Mammary epithelial cell (primary cell): ENCODE measurements at regions of chr22 and their contacts with region 1.

Region 1: GRCh38 chr22:23849009-23850006 is 8.4 kb upstream of the SLC2A11 start:
- DNase-seq: peak; percentile 73
- H3K4me3 ChIP-seq: peak overlapping the region in 2 of 3 experiments; percentile 25 to 37
- H3K27ac ChIP-seq: no peak overlapping the region
- H3K4me1 ChIP-seq: peaks cover 38% of the 10 kb centered on the region
- H3K27me3 ChIP-seq: no peaks in the 10 kb centered on the region
- CTCF ChIP-seq: peak; percentile 74 to 98

Region 2: GRCh38 chr22:23322547-23322946 is 526.8 kb before region 1 on chr22:
- CTCF ChIA-PET with region 1: no interaction called
- dilution Hi-C with region 1: no loop called
- in situ Hi-C with region 1: no loop called
- intact Hi-C with region 1: loop called (anchors 5 kb)
- DNase-seq: no peak
- H3K4me3 ChIP-seq: no peak overlapping the region
- H3K27ac ChIP-seq: no peak overlapping the region
- H3K4me1 ChIP-seq: no peaks in the 10 kb centered on the region
- H3K27me3 ChIP-seq: no peaks in the 10 kb centered on the region
- CTCF ChIP-seq: no peak

Region 3: DNA sequence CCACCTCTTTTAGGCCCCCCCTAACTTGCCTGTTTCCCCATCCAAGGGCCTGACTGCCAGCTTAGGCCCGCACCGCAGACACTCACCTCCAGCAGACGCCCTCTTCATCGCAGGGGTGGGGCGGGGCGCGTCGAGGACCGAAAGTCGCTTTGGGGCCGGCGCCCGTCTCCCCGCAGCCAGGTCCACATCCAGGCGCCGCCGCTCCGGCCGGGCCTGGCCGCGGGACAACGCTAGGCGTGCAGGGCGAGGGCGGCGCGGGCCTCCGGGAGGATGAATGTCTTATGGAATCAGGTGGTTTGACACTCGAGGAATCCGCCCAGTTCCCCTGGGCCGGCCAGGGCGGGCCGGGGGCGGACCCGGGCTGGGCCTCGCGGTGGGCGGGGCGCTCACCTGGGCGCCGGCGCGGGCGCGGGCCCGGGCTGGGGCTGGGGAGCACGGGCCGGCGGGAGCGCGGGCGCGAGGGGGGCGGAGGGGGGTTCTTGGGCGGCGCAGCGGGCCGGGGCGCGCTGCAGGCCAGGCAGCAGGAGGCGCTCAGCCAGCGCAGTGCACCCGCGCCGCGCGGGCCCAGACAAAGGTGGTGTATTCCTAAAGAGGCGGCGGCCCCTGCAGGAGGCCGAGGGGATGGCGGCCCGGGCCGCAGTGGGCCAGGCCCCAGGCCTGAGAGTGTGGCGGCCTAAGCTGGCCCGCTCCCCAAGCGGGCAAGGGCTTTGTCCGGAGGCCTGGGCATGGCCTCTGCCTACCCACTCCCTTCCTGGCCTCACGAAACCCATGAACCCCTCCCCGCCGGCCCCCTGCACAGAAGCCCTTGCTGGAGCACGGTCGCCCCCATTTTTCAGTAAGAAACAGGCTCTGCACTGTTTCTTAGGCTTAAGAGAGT is 446.8 kb before region 1 on chr22:
- CTCF ChIA-PET with region 1: no interaction called
- dilution Hi-C with region 1: no loop called
- in situ Hi-C with region 1: no loop called
- intact Hi-C with region 1: loop called (anchors 5 kb)
- DNase-seq: peak; percentile 81
- H3K4me3 ChIP-seq: peak overlapping the region; percentile 53 to 67 (median 59)
- H3K27ac ChIP-seq: peak overlapping the region; percentile 33
- H3K4me1 ChIP-seq: peaks cover 29% of the 10 kb centered on the region
- H3K27me3 ChIP-seq: no peaks in the 10 kb centered on the region
- CTCF ChIP-seq: peak; percentile 57 to 71

Region 4: DNA sequence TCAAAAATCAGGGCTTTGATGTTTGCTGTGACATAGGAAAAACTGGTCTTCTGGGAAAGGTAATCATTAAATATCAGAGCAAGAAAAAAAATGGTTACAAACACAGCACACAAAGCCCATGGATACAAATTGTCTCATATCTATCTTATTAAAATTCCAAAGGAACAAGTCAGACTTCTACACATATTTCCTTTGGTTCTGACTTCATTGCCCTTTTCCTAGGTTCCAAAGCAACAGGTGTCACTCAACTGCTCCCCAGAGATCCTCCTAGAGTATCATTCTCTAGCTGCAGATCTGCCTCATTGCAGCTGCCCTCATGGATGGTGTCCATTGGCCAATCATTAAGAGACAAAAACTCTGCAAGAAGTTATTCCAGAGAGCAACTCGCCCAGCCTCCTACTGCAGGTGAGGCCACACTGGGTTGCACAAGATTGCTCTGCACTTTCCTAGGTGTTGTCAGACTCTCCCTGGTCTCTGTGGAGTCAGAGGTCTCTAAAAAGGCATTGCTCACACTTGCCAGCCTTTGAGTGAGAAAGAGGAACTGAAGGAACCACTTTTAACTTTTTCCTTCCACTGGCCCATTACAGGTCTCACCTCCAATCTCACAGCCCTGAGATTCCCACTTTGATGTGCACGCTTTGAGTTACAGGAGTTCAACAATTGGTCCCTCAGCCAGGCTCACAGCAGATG is 222.9 kb before region 1 on chr22:
- CTCF ChIA-PET with region 1: no interaction called
- dilution Hi-C with region 1: no loop called
- in situ Hi-C with region 1: no loop called
- intact Hi-C with region 1: loop called (anchors 5 kb)
- DNase-seq: no peak
- H3K4me3 ChIP-seq: no peak overlapping the region
- H3K27ac ChIP-seq: no peak overlapping the region
- H3K4me1 ChIP-seq: no peaks in the 10 kb centered on the region
- H3K27me3 ChIP-seq: peaks cover 5% of the 10 kb centered on the region
- CTCF ChIP-seq: no peak

Region 5: DNA sequence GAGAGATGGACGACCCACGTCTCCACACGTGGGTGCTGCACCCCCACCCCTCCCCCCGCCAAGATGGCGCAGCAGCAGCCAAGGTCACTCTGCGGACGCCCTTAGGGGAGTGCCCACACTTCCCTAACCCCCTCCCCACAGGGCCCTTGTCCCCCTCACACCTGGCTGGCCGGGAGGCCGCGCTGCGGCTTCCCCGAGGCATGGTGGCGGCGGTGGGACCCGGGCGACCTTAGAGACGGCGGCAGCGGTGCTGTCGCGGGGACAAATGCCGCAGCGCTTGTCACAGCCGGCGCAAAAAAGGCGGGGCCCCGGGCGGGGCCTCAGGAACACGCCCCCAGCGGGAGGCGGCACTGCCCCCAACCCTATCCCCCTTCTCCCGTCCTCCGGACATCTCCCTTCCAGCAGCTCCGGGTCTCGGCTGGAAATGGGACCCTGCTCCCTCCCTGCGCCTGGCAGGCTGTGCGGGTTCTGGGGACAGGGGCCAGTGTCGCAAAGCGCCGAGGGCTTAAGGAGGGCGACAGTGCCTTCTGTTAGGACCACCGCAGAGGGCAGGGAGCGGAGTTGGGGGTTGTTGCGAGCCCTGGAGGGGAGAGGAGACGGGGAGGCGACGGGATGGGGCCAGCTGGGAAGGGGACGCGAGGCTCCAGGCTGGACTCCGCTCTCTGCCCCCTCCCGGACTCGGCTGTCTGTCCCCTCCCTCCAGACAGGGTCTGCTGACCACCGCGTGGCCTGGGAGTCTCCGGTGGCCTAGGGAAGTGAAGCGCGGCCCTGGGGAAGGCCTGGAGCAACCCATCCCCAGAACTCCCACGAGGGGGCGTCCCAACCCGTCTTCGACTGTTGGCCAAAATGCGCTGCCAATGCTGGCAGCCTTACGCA is 81.4 kb before region 1 on chr22 and contains the start of gene CHCHD10:
- CTCF ChIA-PET with region 1: interaction called, 7 read pairs
- dilution Hi-C with region 1: loop called (anchors 5 kb)
- in situ Hi-C with region 1: no loop called
- intact Hi-C with region 1: loop called (anchors 1 kb)
- DNase-seq: no peak
- H3K4me3 ChIP-seq: peak within 1 kb of the TSS; percentile 67 to 87 (median 82)
- H3K27ac ChIP-seq: no peak within 1 kb of the TSS
- H3K4me1 ChIP-seq: peaks cover 20% of the 10 kb centered on the region
- H3K27me3 ChIP-seq: no peaks in the 10 kb centered on the region
- CTCF ChIP-seq: peak; percentile 56 to 84
- total RNA-seq, gene CHCHD10: 17.3 to 71.6 TPM

Region 6: GRCh38 chr22:23786752-23787599 is 62.3 kb before region 1 on chr22 and contains the start of gene SMARCB1:
- CTCF ChIA-PET with region 1: no interaction called
- dilution Hi-C with region 1: no loop called
- in situ Hi-C with region 1: loop called in 1 of 2 experiments (anchors 10 kb)
- intact Hi-C with region 1: no loop called
- DNase-seq: peak; percentile 86
- H3K4me3 ChIP-seq: peak within 1 kb of the TSS; percentile 51 to 91 (median 67)
- H3K27ac ChIP-seq: peak within 1 kb of the TSS; percentile 88
- H3K4me1 ChIP-seq: peaks cover 26% of the 10 kb centered on the region
- H3K27me3 ChIP-seq: no peaks in the 10 kb centered on the region
- CTCF ChIP-seq: no peak
- total RNA-seq, gene SMARCB1: 63.5 to 93.8 TPM

Region 7: DNA sequence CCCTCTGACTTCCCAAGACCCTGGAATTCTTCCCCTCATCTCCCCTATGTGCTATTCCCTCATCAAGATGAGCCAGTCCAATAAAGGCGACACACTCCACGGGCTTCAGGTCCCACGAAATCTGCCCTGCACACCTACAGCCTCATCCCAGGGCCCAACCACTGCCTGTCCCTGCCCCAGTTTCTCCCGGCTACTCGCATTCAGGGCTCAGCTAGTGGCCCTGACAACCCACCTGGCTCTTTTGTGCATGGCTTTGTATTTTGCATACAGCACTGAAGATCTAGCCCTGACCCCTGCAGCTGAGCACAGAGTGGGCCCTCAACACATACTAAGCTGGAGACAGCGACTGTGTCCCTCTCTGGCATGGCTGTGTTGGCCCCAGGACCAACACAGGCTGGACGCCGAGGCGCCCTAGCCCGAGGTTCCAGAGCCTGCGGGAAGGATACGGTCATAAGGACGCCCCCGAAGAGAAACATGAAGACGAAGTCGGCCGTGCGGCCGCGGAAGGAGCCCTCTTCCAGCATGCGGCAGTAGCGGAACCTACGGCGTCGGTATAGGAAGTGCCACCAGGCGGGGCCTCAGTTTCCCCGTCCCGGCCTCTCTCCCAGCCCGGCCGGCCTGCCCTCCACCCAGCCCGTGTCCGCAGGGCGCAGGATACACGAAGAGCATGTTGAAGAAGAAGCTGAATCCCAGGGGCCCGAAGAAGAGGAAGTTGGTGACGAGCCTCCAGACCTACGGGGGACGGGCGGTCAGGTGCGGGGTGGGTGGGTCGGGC is 11.2 kb before region 1 on chr22:
- CTCF ChIA-PET with region 1: no interaction called
- dilution Hi-C with region 1: no loop called
- in situ Hi-C with region 1: no loop called
- intact Hi-C with region 1: no loop called
- DNase-seq: no peak
- H3K4me3 ChIP-seq: no peak overlapping the region
- H3K27ac ChIP-seq: no peak overlapping the region
- H3K4me1 ChIP-seq: peaks cover 6% of the 10 kb centered on the region
- H3K27me3 ChIP-seq: no peaks in the 10 kb centered on the region
- CTCF ChIP-seq: no peak

Region 8: GRCh38 chr22:23904573-23905260 is 55.4 kb after region 1 on chr22:
- CTCF ChIA-PET with region 1: no interaction called
- dilution Hi-C with region 1: loop called (anchors 5 kb)
- in situ Hi-C with region 1: no loop called
- intact Hi-C with region 1: no loop called
- DNase-seq: no peak
- H3K4me3 ChIP-seq: no peak overlapping the region
- H3K27ac ChIP-seq: no peak overlapping the region
- H3K4me1 ChIP-seq: peaks cover 17% of the 10 kb centered on the region
- H3K27me3 ChIP-seq: no peaks in the 10 kb centered on the region
- CTCF ChIP-seq: no peak